ENCODE measurements at regions of chr3 and their contacts with region 1.

Region 1: DNA sequence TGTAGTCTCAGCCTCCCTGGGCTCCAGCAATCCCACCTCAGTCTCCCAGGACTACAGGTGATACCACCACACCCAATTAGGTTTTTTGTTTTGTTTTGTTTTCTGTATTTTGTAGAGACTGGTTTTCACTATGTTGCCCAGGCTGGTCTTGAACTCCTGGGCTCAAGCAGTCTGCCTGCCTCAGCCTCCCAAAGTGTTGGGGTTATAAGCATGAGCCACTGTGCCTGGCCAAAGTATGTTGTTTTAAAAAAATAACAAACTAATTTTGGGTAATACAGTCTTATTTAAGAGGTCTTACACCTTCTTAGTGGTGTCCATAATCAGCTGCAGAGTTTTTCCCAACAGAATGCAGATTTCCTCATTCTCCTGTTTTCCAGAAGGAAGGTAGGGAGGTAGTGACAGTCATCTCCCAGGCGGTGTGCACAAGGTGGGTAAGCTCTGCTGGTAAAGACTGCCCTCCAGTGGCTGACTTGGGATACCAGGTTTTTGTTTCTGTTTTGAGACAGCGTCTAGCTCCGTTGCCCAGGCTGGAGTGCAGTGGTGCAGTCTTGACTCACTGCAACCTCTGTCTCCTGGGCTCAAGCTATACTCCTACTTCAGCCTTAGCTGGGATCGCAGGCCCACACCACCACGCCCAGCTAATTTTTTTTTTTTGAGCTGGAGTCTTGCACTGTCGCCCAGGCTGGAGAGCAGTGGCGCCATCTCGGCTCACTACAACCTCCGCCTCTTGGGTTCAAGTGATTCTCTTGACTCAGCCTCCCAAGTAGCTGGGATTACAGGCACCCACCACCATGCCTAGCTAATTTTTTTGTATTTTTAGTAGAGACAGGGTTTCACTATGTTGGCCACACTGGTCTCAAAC is 58.4 kb downstream of the MAP6D1 start:
- DNase-seq: peak; percentile 50
- ATAC-seq: peak; percentile 93

Region 2: DNA sequence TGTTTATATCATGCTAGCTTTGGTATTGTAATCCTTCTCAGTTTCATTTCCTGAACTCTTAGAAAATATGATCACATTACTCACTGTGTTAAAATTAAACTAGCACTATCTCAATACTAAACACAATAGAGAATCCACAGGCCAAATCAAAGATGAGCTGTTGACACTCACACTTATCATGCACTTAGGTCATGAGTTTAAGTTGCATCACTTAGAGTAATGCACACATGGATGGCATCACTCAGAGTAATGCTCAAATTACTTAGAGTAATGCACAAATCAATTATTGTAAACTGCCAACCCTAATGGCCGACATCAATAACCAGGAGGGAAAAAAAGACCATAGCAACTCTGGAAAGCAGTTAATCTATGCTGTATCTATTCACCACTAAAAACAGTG is 298.6 kb before region 1 on chr3:
- intact Hi-C with region 1: loop called (anchors 5 kb)
- DNase-seq: no peak
- ATAC-seq: no peak

Region 3: GRCh38 chr3:183837390-183837789 is 70.4 kb after region 1 on chr3:
- intact Hi-C with region 1: no loop called
- DNase-seq: no peak
- ATAC-seq: no peak

Region 4: GRCh38 chr3:183878071-183878470 is 111.1 kb after region 1 on chr3:
- intact Hi-C with region 1: no loop called
- DNase-seq: no peak
- ATAC-seq: peak; percentile 66

Region 5: DNA sequence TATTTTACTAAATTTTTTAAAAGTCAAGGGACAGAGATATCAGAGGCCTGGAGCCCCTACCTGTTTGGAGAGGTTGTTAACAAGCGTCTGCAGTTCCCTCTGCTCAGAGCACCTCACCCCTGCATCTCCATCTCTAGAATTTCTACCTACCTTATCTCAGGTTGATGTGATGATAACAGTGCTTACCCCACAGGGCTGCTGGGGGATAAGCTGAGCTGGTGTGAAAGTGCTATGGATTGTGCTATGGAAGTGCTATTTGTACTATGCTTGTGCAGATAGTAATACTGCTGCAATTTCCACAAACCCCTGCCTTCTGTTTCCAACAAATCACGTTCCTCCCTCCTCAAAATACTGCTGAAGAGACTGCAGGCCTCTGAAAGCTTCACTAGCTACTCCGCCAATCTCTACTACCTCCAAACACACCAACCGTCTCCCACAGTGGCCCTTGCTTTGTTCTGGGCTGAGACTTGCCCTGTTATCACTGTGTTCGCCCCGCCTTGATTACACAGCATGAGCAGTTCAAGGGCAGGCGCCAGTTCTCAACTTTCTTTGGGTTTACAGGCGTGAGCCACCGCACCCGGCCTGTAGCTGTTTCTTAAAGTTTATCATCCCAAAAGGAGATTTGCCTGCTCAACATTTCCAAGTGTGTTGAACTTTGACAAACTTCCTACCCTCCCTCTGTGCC is 146.1 kb after region 1 on chr3:
- intact Hi-C with region 1: no loop called
- DNase-seq: no peak
- ATAC-seq: no peak

Region 6: DNA sequence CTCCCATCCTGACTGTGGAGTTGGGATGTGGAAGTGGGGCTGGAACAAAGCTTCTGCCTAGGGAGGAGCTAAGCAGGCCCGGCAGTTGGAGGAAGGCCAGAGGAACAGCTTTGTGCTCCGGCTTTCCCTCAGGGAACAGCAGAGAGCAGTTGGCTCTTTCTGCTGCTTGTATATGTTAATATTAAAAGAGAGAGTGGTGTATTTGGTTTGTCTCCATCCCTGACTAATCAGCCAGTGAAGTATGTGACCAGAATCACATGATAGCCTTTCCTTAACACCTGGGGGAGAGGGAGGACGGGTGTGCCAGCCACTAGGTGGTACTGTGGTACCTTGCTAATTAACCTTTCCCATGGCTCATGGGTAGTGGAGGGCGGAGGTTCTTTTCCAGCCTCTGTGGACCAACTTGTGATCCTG is 378.1 kb after region 1 on chr3:
- intact Hi-C with region 1: no loop called
- DNase-seq: peak; percentile 61
- ATAC-seq: peak; percentile 72

Measured in left ventricle myocardium superior (tissue), 1 donor.